ENCODE measurements at regions of chr4 and their contacts with region 1.

Region 1: DNA sequence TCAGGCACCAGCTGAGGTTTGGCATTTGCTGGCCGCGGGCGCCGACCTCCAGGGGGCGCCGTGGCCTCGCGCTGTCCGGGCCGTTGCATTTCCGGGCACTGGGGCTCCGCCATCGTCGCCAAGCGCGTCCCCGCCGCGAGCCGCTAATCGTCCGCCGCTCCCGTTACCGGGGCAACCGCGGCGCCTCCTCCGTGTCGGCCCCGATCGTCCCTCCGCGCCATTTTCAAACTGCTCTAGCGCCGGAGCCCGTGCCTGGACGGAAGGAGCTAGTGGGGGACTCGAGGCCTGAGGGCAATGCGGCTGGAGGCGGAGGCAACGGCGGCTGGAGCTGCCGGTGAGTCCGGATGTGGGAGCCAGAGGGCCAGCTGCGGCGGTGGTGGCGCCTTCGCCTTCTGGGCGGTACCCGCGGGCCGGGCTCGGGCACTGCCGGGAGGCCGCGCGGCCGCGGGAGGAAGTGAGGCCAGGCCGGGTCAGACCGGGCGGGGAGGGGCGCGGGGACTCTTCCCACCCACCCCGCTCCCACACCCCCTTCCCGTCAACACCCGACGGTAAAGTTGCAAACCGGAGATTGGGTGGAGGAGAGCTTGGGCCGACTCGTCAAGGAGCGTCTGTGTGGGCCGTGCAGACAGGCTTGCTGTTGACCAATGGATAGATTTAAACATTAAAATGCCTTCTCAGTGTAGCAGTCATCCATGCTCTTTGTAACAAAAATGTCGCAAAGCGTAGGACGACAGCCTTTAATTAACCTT is at the start of gene CEP135:
- DNase-seq: peak; percentile 97 to 99
- ATAC-seq: peak; percentile 100
- H3K4me3 ChIP-seq: peak within 1 kb of the TSS; percentile 46 to 85
- H3K27ac ChIP-seq: peak within 1 kb of the TSS; percentile 27 to 85
- H3K4me1 ChIP-seq: peaks cover 0 to 5% of the 10 kb centered on the region in 2 donors
- H3K27me3 ChIP-seq: no peaks in the 10 kb centered on the region
- total RNA-seq, gene CEP135: 10.4 to 13.5 TPM

Region 2: DNA sequence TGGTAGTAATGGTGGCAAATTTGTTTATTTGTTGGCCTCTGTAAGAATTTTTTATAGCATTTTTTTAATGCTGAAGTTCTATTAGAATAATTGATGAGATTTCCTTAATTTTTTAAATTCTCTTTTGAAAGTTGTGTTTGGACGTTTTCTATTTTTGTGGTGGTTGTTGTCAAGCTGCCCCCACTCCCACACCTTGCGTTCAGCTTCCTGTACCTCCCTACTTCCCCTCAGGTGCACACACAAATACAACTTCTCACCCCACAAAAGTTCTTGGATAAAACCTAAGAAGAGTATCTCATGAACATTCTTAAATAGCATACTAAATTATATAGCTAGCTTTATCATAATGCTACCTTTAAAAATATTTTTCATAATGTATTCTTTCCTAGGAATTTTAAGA is 56.7 kb before region 1 on chr4:
- intact Hi-C with region 1: loop called in 1 of 2 experiments (anchors 2 kb)
- DNase-seq: no peak
- ATAC-seq: no peak
- H3K4me3 ChIP-seq: no peak overlapping the region
- H3K27ac ChIP-seq: no peak overlapping the region
- H3K4me1 ChIP-seq: no peaks in the 10 kb centered on the region
- H3K27me3 ChIP-seq: no peaks in the 10 kb centered on the region

Region 3: DNA sequence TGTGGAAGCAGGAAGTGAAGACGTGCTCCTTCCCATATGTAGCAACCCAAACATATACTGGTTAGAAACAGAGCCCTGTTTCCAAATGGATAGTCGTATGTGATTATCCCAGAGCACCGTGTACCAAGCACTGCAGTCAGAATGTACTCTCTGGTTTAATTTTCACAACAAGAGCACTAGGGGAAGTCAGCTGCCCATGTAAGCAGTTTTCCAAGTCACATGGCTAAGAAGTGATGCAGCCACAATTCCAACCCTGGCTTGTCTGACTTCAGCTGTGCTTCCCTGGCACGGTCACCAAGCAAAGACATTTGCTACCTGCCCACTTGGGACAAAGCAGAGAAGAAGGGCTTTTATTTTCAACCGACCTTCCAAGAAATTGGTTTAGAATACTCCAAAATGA is 28.3 kb before region 1 on chr4:
- intact Hi-C with region 1: no loop called
- DNase-seq: peak in 1 of 2 donors; percentile 45
- ATAC-seq: no peak
- H3K4me3 ChIP-seq: no peak overlapping the region
- H3K27ac ChIP-seq: no peak overlapping the region
- H3K4me1 ChIP-seq: no peaks in the 10 kb centered on the region
- H3K27me3 ChIP-seq: no peaks in the 10 kb centered on the region

Region 4: DNA sequence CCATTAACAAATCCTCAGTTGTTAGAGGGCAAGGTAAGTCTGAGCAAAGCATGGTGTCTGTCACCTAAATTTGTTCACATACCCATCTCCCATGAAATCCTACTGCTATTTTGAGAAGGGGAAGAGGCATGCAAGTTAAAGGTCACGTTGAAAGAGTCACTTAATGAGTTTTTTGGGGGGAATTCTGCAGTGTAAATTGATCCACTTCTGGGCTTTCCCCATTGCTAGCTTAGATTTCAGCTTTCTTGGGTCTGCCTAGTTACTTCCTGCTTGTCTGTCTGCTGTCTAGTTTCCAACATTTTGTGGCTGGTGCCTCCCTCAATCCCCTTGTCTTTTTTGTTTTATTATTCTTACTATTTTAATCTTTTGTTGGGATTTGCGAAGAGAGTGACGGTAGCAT is 31.8 kb after region 1 on chr4:
- intact Hi-C with region 1: no loop called
- DNase-seq: no peak
- ATAC-seq: no peak
- H3K4me3 ChIP-seq: no peak overlapping the region
- H3K27ac ChIP-seq: no peak overlapping the region
- H3K4me1 ChIP-seq: no peaks in the 10 kb centered on the region
- H3K27me3 ChIP-seq: no peaks in the 10 kb centered on the region

Region 5: GRCh38 chr4:56301181-56302076 is 352.5 kb after region 1 on chr4:
- intact Hi-C with region 1: loop called (anchors 5 to 10 kb)
- DNase-seq: peak in 1 of 2 donors; percentile 73
- ATAC-seq: peak; percentile 87
- H3K4me3 ChIP-seq: no peak overlapping the region
- H3K27ac ChIP-seq: no peak overlapping the region
- H3K4me1 ChIP-seq: no peaks in the 10 kb centered on the region
- H3K27me3 ChIP-seq: no peaks in the 10 kb centered on the region